Psoas muscle (tissue), 8 donors: ENCODE measurements at regions of chr5 and their contacts with region 1.

Region 1: DNA sequence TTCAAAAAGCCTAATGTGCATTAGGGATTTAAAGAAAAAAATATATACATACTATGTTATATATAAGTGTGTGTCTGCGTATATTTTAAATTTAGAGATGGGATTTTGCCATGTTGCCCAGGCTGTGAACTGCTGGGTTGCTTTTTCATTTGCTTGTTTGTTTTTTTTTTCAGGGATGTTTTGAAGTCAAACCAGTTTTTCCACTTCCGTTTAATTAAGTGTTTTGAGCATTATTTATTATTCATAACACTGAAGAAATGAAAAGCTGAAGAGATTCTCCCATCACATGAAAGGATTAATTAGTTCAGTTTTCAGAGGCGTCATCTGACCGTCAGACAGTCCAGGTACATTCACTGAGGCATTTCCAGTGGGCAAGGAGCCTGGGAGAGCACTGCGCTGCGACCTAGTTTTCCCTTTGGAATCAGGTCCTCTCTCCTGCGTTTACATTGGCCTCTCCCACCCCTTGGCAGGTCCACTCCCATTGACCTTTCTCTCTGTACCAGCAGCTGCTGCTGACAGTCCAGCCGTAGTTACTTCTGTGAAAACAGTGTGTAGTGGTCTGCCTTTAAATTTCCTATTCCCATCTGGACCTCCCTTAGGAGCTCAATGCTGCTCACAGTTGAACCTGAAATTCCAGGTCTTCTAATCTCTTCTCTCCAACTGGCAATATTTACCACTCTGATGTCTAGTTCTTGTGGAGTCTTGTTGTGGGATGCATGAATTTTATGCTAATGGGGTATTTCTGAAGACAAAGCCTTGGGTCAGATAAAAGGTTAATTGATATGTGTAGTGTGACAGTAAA is 25.9 kb downstream of the ARRDC3 start:
- DNase-seq: no peak
- ATAC-seq: peak; percentile 66 to 86 (median 78)
- H3K4me3 ChIP-seq: peak overlapping the region; percentile 25
- H3K27ac ChIP-seq: peak overlapping the region; percentile 65
- H3K4me1 ChIP-seq: peaks cover 22% of the 10 kb centered on the region
- H3K27me3 ChIP-seq: no peaks in the 10 kb centered on the region
- CTCF ChIP-seq: no peak

Region 2: DNA sequence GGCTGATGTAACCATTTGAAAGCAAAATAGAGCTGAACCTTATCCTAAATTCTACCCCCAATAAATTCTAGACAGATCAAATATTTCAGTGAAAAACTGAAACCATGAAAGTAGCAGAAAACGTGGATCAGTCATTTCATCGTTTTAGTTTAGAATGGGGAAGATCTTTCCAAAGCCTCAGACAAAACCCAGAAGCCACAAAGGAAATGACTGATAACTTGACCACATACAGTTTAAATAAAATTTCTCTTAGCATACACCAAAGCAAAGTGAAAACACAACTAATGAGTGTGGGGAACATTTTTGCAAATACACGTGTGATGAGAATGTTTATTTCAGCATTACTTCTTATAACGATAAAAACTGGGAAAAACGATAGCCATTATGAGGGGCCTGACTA is 513.8 kb before region 1 on chr5:
- intact Hi-C with region 1: no loop called
- DNase-seq: no peak
- ATAC-seq: no peak
- H3K4me3 ChIP-seq: no peak overlapping the region
- H3K27ac ChIP-seq: no peak overlapping the region
- H3K4me1 ChIP-seq: no peaks in the 10 kb centered on the region
- H3K27me3 ChIP-seq: no peaks in the 10 kb centered on the region
- CTCF ChIP-seq: no peak

Region 3: DNA sequence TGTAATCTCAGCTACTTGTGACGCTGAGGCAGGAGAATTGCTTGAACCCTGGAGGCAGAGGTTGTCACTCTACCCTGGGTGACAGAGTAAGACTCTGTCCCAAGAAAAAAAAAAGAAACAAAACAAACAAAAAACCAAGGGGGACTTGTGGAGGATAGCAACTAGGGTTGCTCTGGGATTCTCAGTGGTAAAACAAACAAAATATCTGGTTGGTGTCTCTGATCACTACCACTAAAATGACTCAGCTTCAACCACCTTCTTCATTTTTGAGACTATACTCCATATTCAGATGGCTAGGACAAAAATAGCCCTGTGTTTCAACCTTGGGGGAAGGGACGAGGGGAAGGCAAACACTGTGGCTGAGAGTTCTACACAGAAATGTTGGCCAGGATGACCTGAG is 84.4 kb before region 1 on chr5:
- intact Hi-C with region 1: no loop called
- DNase-seq: no peak
- ATAC-seq: no peak
- H3K4me3 ChIP-seq: no peak overlapping the region
- H3K27ac ChIP-seq: no peak overlapping the region
- H3K4me1 ChIP-seq: no peaks in the 10 kb centered on the region
- H3K27me3 ChIP-seq: no peaks in the 10 kb centered on the region
- CTCF ChIP-seq: no peak

Region 4: DNA sequence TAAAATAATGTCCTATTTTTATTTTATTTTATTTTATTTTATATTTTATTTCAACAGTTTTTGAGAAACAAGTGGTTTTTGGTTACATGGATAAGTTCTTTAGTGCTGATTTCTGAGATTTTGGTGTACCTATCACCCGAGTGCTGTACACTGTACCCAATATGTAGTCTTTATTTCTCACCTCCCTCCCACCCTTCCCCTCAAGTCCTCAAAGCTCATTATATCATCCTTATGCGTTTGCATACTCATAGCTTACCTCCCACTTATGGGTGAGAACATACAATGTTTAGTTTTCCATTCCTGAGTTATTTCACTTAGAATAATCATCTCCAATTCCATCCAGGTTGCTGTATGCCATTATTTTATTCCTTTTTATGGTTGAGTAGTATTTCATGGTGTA is 37.5 kb before region 1 on chr5:
- intact Hi-C with region 1: loop called in 1 of 2 experiments (anchors 5 kb)
- DNase-seq: no peak
- ATAC-seq: no peak
- H3K4me3 ChIP-seq: no peak overlapping the region
- H3K27ac ChIP-seq: no peak overlapping the region
- H3K4me1 ChIP-seq: peaks cover 7% of the 10 kb centered on the region
- H3K27me3 ChIP-seq: no peaks in the 10 kb centered on the region
- CTCF ChIP-seq: no peak